CD4-positive, alpha-beta memory T cell (primary cell): ENCODE measurements at regions of chrX and their contacts with region 1.

Region 1: DNA sequence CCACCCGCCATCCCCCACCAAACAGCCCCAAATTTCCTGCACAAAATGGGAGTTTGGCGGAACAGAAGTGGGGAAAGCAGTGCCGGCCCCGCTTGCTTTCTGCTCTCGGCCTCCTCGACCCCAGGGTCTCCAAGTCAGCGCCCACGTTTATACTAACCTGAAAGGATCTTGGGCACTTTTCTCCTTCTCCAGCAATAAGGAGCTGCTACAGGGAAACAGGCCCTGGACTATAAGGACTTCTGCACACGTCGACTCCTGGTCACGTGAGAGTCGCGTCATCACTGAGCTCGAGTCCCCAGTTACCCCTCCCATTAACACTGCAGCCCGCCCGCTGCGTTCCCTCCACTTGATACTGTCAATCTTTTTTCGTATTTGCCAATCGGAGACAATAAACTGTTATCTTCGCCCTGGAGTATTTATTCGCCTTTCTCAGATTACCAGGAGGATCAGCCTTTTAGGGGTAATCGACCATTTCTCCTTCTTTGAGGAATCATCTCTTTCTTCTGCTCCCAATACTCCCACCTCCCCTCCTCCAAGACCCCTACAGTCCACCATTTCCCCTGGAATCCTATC is at the start of gene TCEAL8:
- DNase-seq: peak; percentile 41 to 76 (median 54)
- H3K4me3 ChIP-seq: peak within 1 kb of the TSS; percentile 47 to 83
- H3K4me3 Mint-ChIP-seq: peak within 1 kb of the TSS; percentile 90 to 97 (median 96)
- H3K27ac ChIP-seq: peak within 1 kb of the TSS; percentile 73
- H3K27ac Mint-ChIP-seq: peak within 1 kb of the TSS; percentile 91 to 97 (median 95)
- H3K4me1 ChIP-seq: peaks cover 9% of the 10 kb centered on the region
- H3K4me1 Mint-ChIP-seq: peaks cover 13 to 38% (median 18%) of the 10 kb centered on the region in 4 donors
- H3K27me3 ChIP-seq: no peaks in the 10 kb centered on the region
- H3K27me3 Mint-ChIP-seq: no peaks in the 10 kb centered on the region
- total RNA-seq, gene TCEAL8: 33.9 to 35.3 TPM

Region 2: DNA sequence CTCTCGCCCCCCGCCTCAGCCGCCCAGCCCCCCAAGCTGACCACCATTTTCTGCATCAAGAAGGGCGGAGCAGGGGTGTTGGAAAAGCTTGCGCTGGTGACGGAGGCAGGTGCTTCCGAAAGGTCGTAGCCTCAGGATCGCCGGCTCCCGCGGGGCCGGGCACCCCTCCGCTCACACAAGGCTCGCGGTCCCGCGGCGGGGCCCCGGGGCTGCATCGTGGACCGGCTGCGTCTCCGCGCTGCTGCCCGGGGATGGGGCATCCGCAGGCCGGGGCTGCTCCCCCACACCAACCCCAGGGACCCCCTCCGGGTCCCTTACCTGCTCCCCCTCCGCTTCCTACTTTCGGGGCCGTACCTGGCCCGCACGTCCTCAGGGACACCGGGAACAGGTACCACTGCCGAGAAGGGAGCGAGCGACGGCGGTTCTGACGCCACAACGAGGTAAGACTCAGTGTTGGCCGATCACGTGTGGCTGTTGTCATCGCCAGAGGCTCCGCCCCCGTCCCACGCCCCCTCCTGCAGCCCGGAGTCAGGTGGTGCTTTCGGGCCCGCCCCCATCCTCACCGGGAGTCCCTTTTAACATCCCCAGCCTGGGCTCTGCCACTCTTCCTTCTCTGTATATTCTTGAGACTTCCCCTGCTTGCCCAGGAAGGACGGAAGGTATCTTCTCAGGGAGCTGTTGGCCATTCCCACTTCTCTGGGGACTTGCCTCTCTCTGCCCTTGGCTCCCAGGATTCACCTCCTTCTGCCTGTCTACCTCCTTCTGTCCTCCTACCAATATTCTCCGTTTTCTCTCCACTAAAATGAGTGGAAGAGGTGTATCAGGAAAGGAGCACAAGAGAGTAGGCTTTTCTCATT is 55.8 kb after region 1 on chrX and contains the start of gene BEX2:
- CTCF ChIA-PET with region 1: no interaction called
- POLR2A ChIA-PET with region 1: no interaction called
- intact Hi-C with region 1: loop called (anchors 2 kb)
- DNase-seq: peak; percentile 79 to 89 (median 84)
- H3K4me3 ChIP-seq: peak within 1 kb of the TSS in 1 of 2 donors; percentile 71
- H3K4me3 Mint-ChIP-seq: peak within 1 kb of the TSS; percentile 73 to 86 (median 80)
- H3K27ac ChIP-seq: peak within 1 kb of the TSS; percentile 78
- H3K27ac Mint-ChIP-seq: peak within 1 kb of the TSS; percentile 54 to 89 (median 83)
- H3K4me1 ChIP-seq: peaks cover 7% of the 10 kb centered on the region
- H3K4me1 Mint-ChIP-seq: peaks cover 0 to 5% (median 4%) of the 10 kb centered on the region in 4 donors
- H3K27me3 ChIP-seq: no peaks in the 10 kb centered on the region
- H3K27me3 Mint-ChIP-seq: no peaks in the 10 kb centered on the region
- total RNA-seq, gene BEX2: 41.9 to 48.2 TPM